Natural killer cell (primary cell): ENCODE measurements at regions of chr14 and their contacts with region 1.

Region 1: GRCh38 chr14:37985826-37986470 is 221.8 kb upstream of the SSTR1 start:
- DNase-seq: peak; percentile 30 to 80
- ATAC-seq: peak in 2 of 3 donors; percentile 68 to 77
- H3K4me3 ChIP-seq: no peak overlapping the region
- H3K4me3 Mint-ChIP-seq: no peak overlapping the region
- H3K27ac ChIP-seq: no peak overlapping the region
- H3K27ac Mint-ChIP-seq: no peak overlapping the region
- H3K4me1 ChIP-seq: no peaks in the 10 kb centered on the region
- H3K4me1 Mint-ChIP-seq: peaks cover 4 to 5% of the 10 kb centered on the region in 2 donors
- H3K27me3 ChIP-seq: no peaks in the 10 kb centered on the region
- H3K27me3 Mint-ChIP-seq: peaks cover 3 to 7% of the 10 kb centered on the region in 2 donors
- CTCF ChIP-seq: peak; percentile 97

Region 2: GRCh38 chr14:38073641-38074040 is 87.7 kb after region 1 on chr14:
- intact Hi-C with region 1: loop called (anchors 5 kb)
- DNase-seq: peak in 1 of 2 donors; percentile 61
- ATAC-seq: peak; percentile 4 to 30 (median 11)
- H3K4me3 ChIP-seq: no peak overlapping the region
- H3K4me3 Mint-ChIP-seq: peak overlapping the region; percentile 80
- H3K27ac ChIP-seq: peak overlapping the region; percentile 81
- H3K27ac Mint-ChIP-seq: peak overlapping the region; percentile 95 to 97
- H3K4me1 ChIP-seq: peaks cover 23% of the 10 kb centered on the region
- H3K4me1 Mint-ChIP-seq: peaks cover 58 to 79% of the 10 kb centered on the region in 2 donors
- H3K27me3 ChIP-seq: no peaks in the 10 kb centered on the region
- H3K27me3 Mint-ChIP-seq: no peaks in the 10 kb centered on the region
- CTCF ChIP-seq: no peak

Region 3: DNA sequence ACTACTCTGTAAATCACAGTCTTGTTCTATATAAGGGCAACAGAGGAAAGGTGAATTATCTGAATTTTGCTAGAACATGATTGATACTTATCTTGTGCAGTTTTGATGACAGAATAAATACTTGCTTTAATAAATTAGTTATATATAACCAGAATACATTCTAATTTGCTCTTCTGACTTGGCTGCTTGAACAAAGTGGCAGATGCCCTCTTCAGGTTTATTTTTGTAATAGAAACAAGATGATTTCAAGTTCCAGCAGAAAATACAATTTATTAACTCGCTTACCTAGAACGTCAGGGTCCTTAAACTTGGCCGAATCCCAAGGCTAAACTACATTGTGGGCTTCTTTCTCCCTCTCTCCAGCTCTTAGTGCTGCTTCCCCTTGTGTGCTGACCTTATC is 164.1 kb after region 1 on chr14:
- intact Hi-C with region 1: loop called (anchors 1 kb)
- DNase-seq: peak in 1 of 2 donors; percentile 8
- ATAC-seq: no peak
- H3K4me3 ChIP-seq: no peak overlapping the region
- H3K4me3 Mint-ChIP-seq: no peak overlapping the region
- H3K27ac ChIP-seq: no peak overlapping the region
- H3K27ac Mint-ChIP-seq: no peak overlapping the region
- H3K4me1 ChIP-seq: no peaks in the 10 kb centered on the region
- H3K4me1 Mint-ChIP-seq: no peaks in the 10 kb centered on the region
- H3K27me3 ChIP-seq: no peaks in the 10 kb centered on the region
- H3K27me3 Mint-ChIP-seq: peaks cover 4 to 16% of the 10 kb centered on the region in 2 donors
- CTCF ChIP-seq: no peak

Region 4: GRCh38 chr14:38197001-38197783 is 211.2 kb after region 1 on chr14:
- intact Hi-C with region 1: loop called (anchors 1 kb)
- DNase-seq: peak in 1 of 2 donors; percentile 34
- ATAC-seq: peak in 2 of 3 donors; percentile 53 to 58
- H3K4me3 ChIP-seq: no peak overlapping the region
- H3K4me3 Mint-ChIP-seq: no peak overlapping the region
- H3K27ac ChIP-seq: no peak overlapping the region
- H3K27ac Mint-ChIP-seq: no peak overlapping the region
- H3K4me1 ChIP-seq: no peaks in the 10 kb centered on the region
- H3K4me1 Mint-ChIP-seq: peaks cover 0 to 5% of the 10 kb centered on the region in 2 donors
- H3K27me3 ChIP-seq: no peaks in the 10 kb centered on the region
- H3K27me3 Mint-ChIP-seq: peaks cover 7 to 15% of the 10 kb centered on the region in 2 donors
- CTCF ChIP-seq: peak; percentile 74

Region 5: DNA sequence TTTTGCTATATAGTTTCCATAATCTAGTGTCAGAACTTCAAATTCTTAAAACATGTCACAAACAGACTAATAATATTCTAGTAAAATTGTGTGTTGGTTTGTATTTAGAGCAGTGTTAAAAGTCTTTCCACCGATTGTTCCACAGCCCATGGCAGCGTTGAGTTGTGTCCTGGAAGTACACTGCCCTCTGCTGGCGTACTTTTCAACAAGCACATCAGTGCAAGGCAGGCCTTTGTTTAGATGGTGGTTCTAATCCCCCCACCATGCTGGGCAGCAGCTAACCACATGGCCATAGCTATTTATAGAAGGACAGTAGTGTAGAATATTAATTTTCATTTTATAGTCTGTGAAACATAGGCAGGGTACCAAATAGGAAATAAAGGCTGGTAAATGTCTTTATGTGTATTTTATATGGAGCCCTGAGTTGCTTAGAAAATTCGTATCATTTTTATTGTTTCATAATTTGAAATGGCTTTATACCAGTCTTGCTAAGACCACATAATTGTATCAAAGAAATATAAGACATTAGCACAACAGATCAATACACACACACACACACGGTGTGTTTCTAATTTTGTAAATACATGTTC is 881.7 kb after region 1 on chr14:
- intact Hi-C with region 1: loop called (anchors 5 kb)
- DNase-seq: peak; percentile 18 to 76
- ATAC-seq: peak; percentile 57 to 72 (median 69)
- H3K4me3 ChIP-seq: no peak overlapping the region
- H3K4me3 Mint-ChIP-seq: no peak overlapping the region
- H3K27ac ChIP-seq: no peak overlapping the region
- H3K27ac Mint-ChIP-seq: no peak overlapping the region
- H3K4me1 ChIP-seq: no peaks in the 10 kb centered on the region
- H3K4me1 Mint-ChIP-seq: no peaks in the 10 kb centered on the region
- H3K27me3 ChIP-seq: no peaks in the 10 kb centered on the region
- H3K27me3 Mint-ChIP-seq: peaks cover 0 to 3% of the 10 kb centered on the region in 2 donors
- CTCF ChIP-seq: peak; percentile 65

Region 6: GRCh38 chr14:39015360-39015961 is 1029.5 kb after region 1 on chr14:
- intact Hi-C with region 1: loop called (anchors 5 kb)
- DNase-seq: peak in 1 of 2 donors; percentile 55
- ATAC-seq: peak in 1 of 3 donors; percentile 61
- H3K4me3 ChIP-seq: no peak overlapping the region
- H3K4me3 Mint-ChIP-seq: no peak overlapping the region
- H3K27ac ChIP-seq: no peak overlapping the region
- H3K27ac Mint-ChIP-seq: no peak overlapping the region
- H3K4me1 ChIP-seq: no peaks in the 10 kb centered on the region
- H3K4me1 Mint-ChIP-seq: peaks cover 0 to 5% of the 10 kb centered on the region in 2 donors
- H3K27me3 ChIP-seq: no peaks in the 10 kb centered on the region
- H3K27me3 Mint-ChIP-seq: no peaks in the 10 kb centered on the region
- CTCF ChIP-seq: peak; percentile 69